Calu3 (cell line): ENCODE measurements at regions of chr1 and their contacts with region 1.

Region 1: DNA sequence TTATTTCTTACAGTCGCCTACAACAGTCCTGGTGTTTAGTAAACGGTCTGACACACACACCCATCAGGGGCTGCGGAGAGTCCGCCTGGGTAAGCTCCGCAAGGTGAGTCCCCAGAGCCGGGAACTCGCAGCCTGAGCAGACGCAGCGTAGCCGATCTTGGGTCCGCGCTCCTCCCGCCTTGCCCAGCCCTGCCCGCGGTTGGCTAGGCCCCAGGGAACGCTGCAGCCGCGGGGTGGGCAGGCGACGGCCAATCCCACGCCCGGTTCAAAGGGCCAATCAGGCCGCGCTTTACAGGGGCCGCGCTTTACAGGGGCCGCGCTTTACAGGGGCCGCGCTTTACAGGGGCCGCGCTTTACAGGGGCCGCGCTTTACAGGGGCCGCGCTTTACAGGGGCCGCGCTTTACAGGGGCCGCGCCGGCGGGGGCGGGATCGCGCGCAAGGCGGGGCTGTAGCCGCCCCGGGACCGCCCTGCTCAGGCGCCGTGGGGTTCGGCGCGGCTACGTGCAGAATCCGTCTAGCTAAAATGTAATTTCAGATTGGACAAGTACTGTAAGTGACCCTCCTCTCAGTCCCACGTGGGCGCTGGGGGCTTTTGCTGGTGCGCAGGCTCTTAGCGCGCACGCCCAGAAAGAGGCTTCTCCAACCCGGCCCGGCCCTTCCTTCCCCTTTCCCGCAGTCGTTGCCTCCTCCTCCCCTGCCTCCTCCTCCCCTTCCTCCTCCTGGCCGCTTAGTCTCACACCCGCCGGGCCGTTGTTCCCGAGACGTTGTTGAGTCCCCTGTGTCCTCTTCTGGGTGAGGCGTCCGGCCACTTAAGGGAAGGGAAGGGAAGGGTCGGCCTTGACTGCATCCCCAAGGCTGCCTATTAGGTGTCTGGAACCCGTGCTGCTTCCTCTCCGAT is at the start of gene FGGY:
- DNase-seq: peak; percentile 95
- H3K4me3 Mint-ChIP-seq: peak within 1 kb of the TSS; percentile 76
- H3K27ac Mint-ChIP-seq: peak within 1 kb of the TSS; percentile 71
- H3K4me1 Mint-ChIP-seq: peaks cover 30% of the 10 kb centered on the region
- H3K27me3 Mint-ChIP-seq: no peaks in the 10 kb centered on the region
- CTCF ChIP-seq: no peak
- total RNA-seq, gene FGGY: 8.5 and 11.1 TPM in 2 replicates

Region 2: DNA sequence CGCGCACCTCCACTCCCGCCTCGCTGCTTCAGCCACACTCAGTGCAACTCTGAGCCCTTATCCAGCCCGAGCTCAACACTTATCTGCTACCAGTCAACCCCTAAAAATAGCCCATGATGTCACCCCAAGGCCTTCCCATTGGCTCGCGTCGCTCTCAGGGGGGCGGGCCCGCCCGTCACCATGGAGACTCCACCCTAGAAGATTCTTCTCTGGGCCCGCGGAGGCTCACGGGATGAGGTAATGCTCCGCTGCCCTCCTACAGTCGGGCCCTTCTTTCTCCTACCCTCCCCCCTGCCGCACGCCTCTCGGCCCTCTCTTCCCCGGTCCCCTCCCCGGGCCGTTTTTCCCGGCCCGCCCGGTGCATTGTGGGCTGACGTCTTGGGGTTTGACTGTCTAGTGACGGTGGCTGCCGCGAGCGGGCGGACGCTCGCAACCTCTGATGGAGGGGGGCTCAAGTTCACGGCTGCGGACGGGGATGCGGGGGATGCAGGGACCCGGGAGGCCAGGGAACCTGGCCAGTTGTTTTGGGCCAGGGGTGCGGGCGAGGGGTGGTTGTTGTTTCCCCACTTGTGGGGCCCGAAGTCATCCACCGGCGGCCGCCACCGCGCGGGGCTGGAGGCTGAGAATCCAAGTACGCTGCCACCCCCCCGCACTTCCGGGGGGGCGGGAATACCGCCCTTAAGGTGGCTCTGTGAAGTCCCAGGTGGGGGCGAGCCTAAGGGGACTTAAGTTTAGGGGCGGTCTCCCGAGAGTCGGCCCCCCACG is 512.4 kb before region 1 on chr1 and contains the start of gene JUN:
- CTCF ChIA-PET with region 1: interaction called, 5 read pairs
- intact Hi-C with region 1: loop called (anchors 1 kb)
- DNase-seq: peak; percentile 98
- H3K4me3 Mint-ChIP-seq: peak within 1 kb of the TSS; percentile 97
- H3K27ac Mint-ChIP-seq: peak within 1 kb of the TSS; percentile 99
- H3K4me1 Mint-ChIP-seq: peaks cover 41% of the 10 kb centered on the region
- H3K27me3 Mint-ChIP-seq: peaks cover 13% of the 10 kb centered on the region
- CTCF ChIP-seq: no peak
- total RNA-seq, gene JUN: 76.5 and 89.3 TPM in 2 replicates

Region 3: GRCh38 chr1:58883037-58883887 is 413.3 kb before region 1 on chr1:
- CTCF ChIA-PET with region 1: no interaction called
- intact Hi-C with region 1: loop called (anchors 2 kb)
- DNase-seq: peak; percentile 74
- H3K4me3 Mint-ChIP-seq: peak overlapping the region; percentile 37
- H3K27ac Mint-ChIP-seq: peak overlapping the region; percentile 94
- H3K4me1 Mint-ChIP-seq: peaks cover 72% of the 10 kb centered on the region
- H3K27me3 Mint-ChIP-seq: no peaks in the 10 kb centered on the region
- CTCF ChIP-seq: no peak

Region 4: GRCh38 chr1:59432531-59433439 is 136.2 kb after region 1 on chr1:
- CTCF ChIA-PET with region 1: no interaction called
- intact Hi-C with region 1: loop called (anchors 5 kb)
- DNase-seq: no peak
- H3K4me3 Mint-ChIP-seq: no peak overlapping the region
- H3K27ac Mint-ChIP-seq: peak overlapping the region; percentile 76
- H3K4me1 Mint-ChIP-seq: peaks cover 36% of the 10 kb centered on the region
- H3K27me3 Mint-ChIP-seq: no peaks in the 10 kb centered on the region
- CTCF ChIP-seq: no peak

Region 5: GRCh38 chr1:59556802-59557548 is 260.4 kb after region 1 on chr1:
- CTCF ChIA-PET with region 1: no interaction called
- intact Hi-C with region 1: loop called (anchors 2 kb)
- DNase-seq: peak; percentile 81
- H3K4me3 Mint-ChIP-seq: peak overlapping the region; percentile 24
- H3K27ac Mint-ChIP-seq: peak overlapping the region; percentile 82
- H3K4me1 Mint-ChIP-seq: peaks cover 61% of the 10 kb centered on the region
- H3K27me3 Mint-ChIP-seq: no peaks in the 10 kb centered on the region
- CTCF ChIP-seq: no peak

Region 6: GRCh38 chr1:59678493-59679228 is 382.1 kb after region 1 on chr1:
- CTCF ChIA-PET with region 1: no interaction called
- intact Hi-C with region 1: loop called (anchors 5 kb)
- DNase-seq: peak; percentile 64
- H3K4me3 Mint-ChIP-seq: no peak overlapping the region
- H3K27ac Mint-ChIP-seq: peak overlapping the region; percentile 48
- H3K4me1 Mint-ChIP-seq: peaks cover 36% of the 10 kb centered on the region
- H3K27me3 Mint-ChIP-seq: no peaks in the 10 kb centered on the region
- CTCF ChIP-seq: no peak